Activated CD4-positive, alpha-beta T cell treated with anti-CD3 and anti-CD28 coated beads for 36 hours (primary cell): ENCODE measurements at regions of chr14 and their contacts with region 1.

Region 1: DNA sequence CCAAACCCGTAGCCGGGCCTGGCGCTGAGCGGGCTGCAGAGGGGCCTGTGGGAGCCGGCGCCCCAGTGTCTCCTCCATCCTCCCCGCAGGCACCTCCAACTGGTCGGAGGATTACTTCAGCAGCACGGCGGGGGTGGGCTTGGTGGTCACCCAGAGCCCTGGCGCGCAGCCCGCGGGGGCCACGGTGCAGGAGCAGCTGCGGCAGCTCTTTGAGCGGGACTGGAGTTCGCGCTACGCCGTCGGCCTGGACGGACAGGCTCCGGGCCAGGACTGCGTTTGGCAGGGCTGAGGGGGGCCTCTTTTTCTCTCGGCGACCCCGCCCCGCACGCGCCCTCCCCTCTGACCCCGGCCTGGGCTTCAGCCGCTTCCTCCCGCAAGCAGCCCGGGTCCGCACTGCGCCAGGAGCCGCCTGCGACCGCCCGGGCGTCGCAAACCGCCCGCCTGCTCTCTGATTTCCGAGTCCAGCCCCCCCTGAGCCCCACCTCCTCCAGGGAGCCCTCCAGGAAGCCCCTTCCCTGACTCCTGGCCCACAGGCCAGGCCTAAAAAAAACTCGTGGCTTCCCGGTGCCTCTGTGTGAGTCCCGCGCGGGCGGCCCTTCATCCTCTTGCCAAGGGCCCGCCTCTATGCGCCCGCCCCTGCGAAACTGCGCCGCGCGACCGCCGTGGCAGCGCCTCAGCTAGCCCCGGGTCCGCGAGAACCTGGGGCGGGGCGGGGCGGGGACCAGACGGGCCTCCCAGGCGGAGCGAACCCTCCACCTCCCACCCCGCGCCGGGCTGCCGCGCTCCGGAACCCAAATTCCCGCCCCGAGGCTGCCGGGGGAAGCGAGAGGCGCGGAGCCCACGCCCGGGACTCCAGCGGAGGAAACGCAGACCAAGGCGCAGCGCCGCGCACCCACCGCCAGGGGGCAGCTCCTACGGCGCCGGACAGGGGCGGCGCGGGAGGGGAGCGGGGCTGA is 8.3 kb downstream of the PLD4 start:
- DNase-seq: peak; percentile 93
- ATAC-seq: peak; percentile 96
- H3K4me3 Mint-ChIP-seq: peak overlapping the region; percentile 32
- H3K27ac Mint-ChIP-seq: no peak overlapping the region
- H3K4me1 Mint-ChIP-seq: no peaks in the 10 kb centered on the region
- H3K27me3 Mint-ChIP-seq: peaks cover 8% of the 10 kb centered on the region

Region 2: DNA sequence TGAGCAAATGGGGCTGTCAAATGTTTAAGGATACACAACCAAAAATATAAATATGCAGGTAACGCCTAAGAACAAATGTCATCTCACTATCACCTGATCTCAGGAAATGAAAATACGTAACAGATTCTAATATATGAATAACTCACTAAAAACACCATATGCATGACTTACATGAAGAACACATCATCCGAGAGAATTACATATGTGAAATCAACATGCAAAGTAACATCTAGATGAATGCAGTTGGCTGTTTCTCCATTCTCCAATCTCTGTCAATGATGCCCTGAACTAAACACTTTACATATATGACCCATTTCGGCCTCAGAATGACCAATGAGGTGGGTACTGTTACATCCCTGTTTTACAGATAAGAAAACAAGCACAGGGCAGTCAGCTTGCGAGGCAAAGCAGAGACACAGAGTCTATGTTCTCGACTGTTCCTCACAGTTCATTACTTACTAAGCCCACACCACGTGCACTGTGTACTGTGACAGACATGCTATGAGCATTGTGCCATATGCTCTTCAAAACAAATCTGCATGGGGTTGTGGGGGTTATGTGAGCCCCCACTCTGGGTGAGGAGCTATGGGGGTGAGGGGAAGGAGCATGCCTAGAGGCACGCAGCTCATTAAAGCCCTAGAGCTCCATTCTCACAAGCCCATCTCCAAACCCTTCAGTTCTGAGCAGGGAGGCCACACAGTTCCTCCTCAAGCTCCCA is 1174.7 kb before region 1 on chr14:
- CTCF ChIA-PET with region 1: no interaction called
- POLR2A ChIA-PET with region 1: no interaction called
- intact Hi-C with region 1: loop called in 1 of 2 experiments (anchors 5 kb)
- DNase-seq: no peak
- ATAC-seq: no peak
- H3K4me3 Mint-ChIP-seq: no peak overlapping the region
- H3K27ac Mint-ChIP-seq: no peak overlapping the region
- H3K4me1 Mint-ChIP-seq: peaks cover 3% of the 10 kb centered on the region
- H3K27me3 Mint-ChIP-seq: no peaks in the 10 kb centered on the region

Region 3: GRCh38 chr14:104917993-104918392 is 15.0 kb before region 1 on chr14:
- CTCF ChIA-PET with region 1: no interaction called
- POLR2A ChIA-PET with region 1: no interaction called
- intact Hi-C with region 1: no loop called
- DNase-seq: no peak
- ATAC-seq: no peak
- H3K4me3 Mint-ChIP-seq: no peak overlapping the region
- H3K27ac Mint-ChIP-seq: no peak overlapping the region
- H3K4me1 Mint-ChIP-seq: no peaks in the 10 kb centered on the region
- H3K27me3 Mint-ChIP-seq: peaks cover 12% of the 10 kb centered on the region